ENCODE measurements at regions of chr9 and their contacts with region 1.

Region 1: GRCh38 chr9:123349691-123350480 is 6.1 kb upstream of the CRB2 start:
- DNase-seq: peak; percentile 85
- ATAC-seq: peak; percentile 87
- H3K4me3 ChIP-seq: peak overlapping the region in 3 of 5 experiments; percentile 19 to 50 (median 23)
- H3K4me3 Mint-ChIP-seq: peak overlapping the region; percentile 20
- H3K27ac ChIP-seq: no peak overlapping the region
- H3K27ac Mint-ChIP-seq: no peak overlapping the region
- H3K4me1 ChIP-seq: peaks cover 30 to 52% of the 10 kb centered on the region in 2 donors
- H3K4me1 Mint-ChIP-seq: peaks cover 19% of the 10 kb centered on the region
- H3K27me3 ChIP-seq: peaks cover 0 to 4% (median 0%) of the 10 kb centered on the region in 4 experiments
- H3K27me3 Mint-ChIP-seq: peaks cover 4% of the 10 kb centered on the region
- CTCF ChIP-seq: peak; percentile 95

Region 2: DNA sequence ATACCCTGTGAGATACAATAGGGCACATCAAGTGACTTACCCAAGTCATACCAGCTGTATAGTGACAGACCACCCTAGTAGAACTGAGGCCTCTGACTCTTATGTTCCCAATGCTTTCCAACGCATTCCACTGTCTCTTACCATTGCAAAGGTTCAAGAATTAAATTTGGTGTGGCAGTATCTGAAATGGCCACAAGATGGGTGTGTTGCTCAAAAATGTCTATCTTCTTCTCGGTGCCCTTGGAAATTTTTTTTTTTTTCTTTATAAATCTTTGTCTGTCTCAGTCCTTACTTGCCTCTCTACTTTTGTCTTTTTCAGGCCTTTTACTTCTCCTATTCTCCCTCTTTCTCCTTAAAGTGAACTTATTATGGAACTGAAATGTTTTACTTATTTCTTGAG is 268.1 kb before region 1 on chr9:
- CTCF ChIA-PET with region 1: interaction called, 214 read pairs
- POLR2A ChIA-PET with region 1: interaction called, 5 read pairs
- intact Hi-C with region 1: loop called (anchors 1 kb)
- DNase-seq: peak; percentile 67
- ATAC-seq: peak; percentile 54
- H3K4me3 ChIP-seq: no peak overlapping the region
- H3K4me3 Mint-ChIP-seq: no peak overlapping the region
- H3K27ac ChIP-seq: no peak overlapping the region
- H3K27ac Mint-ChIP-seq: no peak overlapping the region
- H3K4me1 ChIP-seq: peaks cover 0 to 8% of the 10 kb centered on the region in 2 donors
- H3K4me1 Mint-ChIP-seq: peaks cover 22% of the 10 kb centered on the region
- H3K27me3 ChIP-seq: no peaks in the 10 kb centered on the region
- H3K27me3 Mint-ChIP-seq: no peaks in the 10 kb centered on the region
- CTCF ChIP-seq: peak; percentile 81

Region 3: GRCh38 chr9:123138163-123138562 is 211.7 kb before region 1 on chr9:
- CTCF ChIA-PET with region 1: interaction called, 5 read pairs
- POLR2A ChIA-PET with region 1: no interaction called
- intact Hi-C with region 1: loop called (anchors 5 kb)
- DNase-seq: no peak
- ATAC-seq: no peak
- H3K4me3 ChIP-seq: no peak overlapping the region
- H3K4me3 Mint-ChIP-seq: no peak overlapping the region
- H3K27ac ChIP-seq: no peak overlapping the region
- H3K27ac Mint-ChIP-seq: peak overlapping the region; percentile 8
- H3K4me1 ChIP-seq: no peaks in the 10 kb centered on the region
- H3K4me1 Mint-ChIP-seq: peaks cover 23% of the 10 kb centered on the region
- H3K27me3 ChIP-seq: no peaks in the 10 kb centered on the region
- H3K27me3 Mint-ChIP-seq: no peaks in the 10 kb centered on the region
- CTCF ChIP-seq: no peak

Region 4: DNA sequence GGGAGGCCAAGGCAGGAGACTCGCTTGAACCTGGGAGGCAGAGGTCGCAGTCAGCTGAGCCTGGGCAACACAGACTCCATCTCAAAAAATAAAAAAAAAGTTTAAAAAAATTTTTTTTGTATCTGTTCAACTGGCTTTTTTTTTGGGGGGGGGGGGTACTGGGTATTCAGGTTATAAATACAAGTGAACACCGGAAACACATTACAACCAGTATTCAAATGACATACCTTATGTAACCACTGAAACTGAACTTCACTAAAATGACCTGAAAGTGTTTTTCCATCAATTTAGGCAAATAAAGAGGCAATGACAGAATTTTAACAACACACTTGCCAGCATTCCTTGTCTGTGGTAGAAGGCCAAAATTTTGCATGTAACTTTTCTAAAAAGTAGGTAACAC is 115.0 kb before region 1 on chr9:
- CTCF ChIA-PET with region 1: interaction called, 32 read pairs
- POLR2A ChIA-PET with region 1: interaction called, 7 read pairs
- intact Hi-C with region 1: no loop called
- DNase-seq: peak; percentile 75
- ATAC-seq: peak; percentile 63
- H3K4me3 ChIP-seq: peak overlapping the region in 3 of 5 experiments; percentile 8 to 51 (median 23)
- H3K4me3 Mint-ChIP-seq: peak overlapping the region; percentile 75
- H3K27ac ChIP-seq: peak overlapping the region; percentile 85 to 90
- H3K27ac Mint-ChIP-seq: peak overlapping the region; percentile 90
- H3K4me1 ChIP-seq: peaks cover 75 to 82% of the 10 kb centered on the region in 2 donors
- H3K4me1 Mint-ChIP-seq: peaks cover 68% of the 10 kb centered on the region
- H3K27me3 ChIP-seq: no peaks in the 10 kb centered on the region
- H3K27me3 Mint-ChIP-seq: no peaks in the 10 kb centered on the region
- CTCF ChIP-seq: no peak

Region 5: GRCh38 chr9:123282362-123283047 is 67.4 kb before region 1 on chr9:
- CTCF ChIA-PET with region 1: interaction called, 4 read pairs
- POLR2A ChIA-PET with region 1: interaction called, 10 read pairs
- intact Hi-C with region 1: no loop called
- DNase-seq: no peak
- ATAC-seq: no peak
- H3K4me3 ChIP-seq: no peak overlapping the region
- H3K4me3 Mint-ChIP-seq: no peak overlapping the region
- H3K27ac ChIP-seq: no peak overlapping the region
- H3K27ac Mint-ChIP-seq: no peak overlapping the region
- H3K4me1 ChIP-seq: peaks cover 0 to 6% of the 10 kb centered on the region in 2 donors
- H3K4me1 Mint-ChIP-seq: peaks cover 4% of the 10 kb centered on the region
- H3K27me3 ChIP-seq: no peaks in the 10 kb centered on the region
- H3K27me3 Mint-ChIP-seq: no peaks in the 10 kb centered on the region
- CTCF ChIP-seq: no peak

Region 6: GRCh38 chr9:123389070-123389469 is 39.2 kb after region 1 on chr9:
- CTCF ChIA-PET with region 1: interaction called, 19 read pairs
- POLR2A ChIA-PET with region 1: no interaction called
- intact Hi-C with region 1: loop called (anchors 1 kb)
- DNase-seq: no peak
- ATAC-seq: no peak
- H3K4me3 ChIP-seq: no peak overlapping the region
- H3K4me3 Mint-ChIP-seq: no peak overlapping the region
- H3K27ac ChIP-seq: no peak overlapping the region
- H3K27ac Mint-ChIP-seq: no peak overlapping the region
- H3K4me1 ChIP-seq: no peaks in the 10 kb centered on the region
- H3K4me1 Mint-ChIP-seq: peaks cover 2% of the 10 kb centered on the region
- H3K27me3 ChIP-seq: no peaks in the 10 kb centered on the region
- H3K27me3 Mint-ChIP-seq: no peaks in the 10 kb centered on the region
- CTCF ChIP-seq: no peak

Measured in B cell (primary cell).